Activated CD8-positive, alpha-beta T cell treated with anti-CD3 and anti-CD28 coated beads for 36 hours (primary cell): ENCODE measurements at regions of chr2 and their contacts with region 1.

Region 1: GRCh38 chr2:216119986-216120385 is 10.8 kb downstream of the XRCC5 start:
- DNase-seq: peak; percentile 41
- ATAC-seq: peak; percentile 90
- H3K4me3 Mint-ChIP-seq: peak overlapping the region; percentile 46
- H3K27ac Mint-ChIP-seq: peak overlapping the region; percentile 96
- H3K4me1 Mint-ChIP-seq: peaks cover 87% of the 10 kb centered on the region
- H3K27me3 Mint-ChIP-seq: no peaks in the 10 kb centered on the region
- CTCF ChIP-seq: no peak

Region 2: DNA sequence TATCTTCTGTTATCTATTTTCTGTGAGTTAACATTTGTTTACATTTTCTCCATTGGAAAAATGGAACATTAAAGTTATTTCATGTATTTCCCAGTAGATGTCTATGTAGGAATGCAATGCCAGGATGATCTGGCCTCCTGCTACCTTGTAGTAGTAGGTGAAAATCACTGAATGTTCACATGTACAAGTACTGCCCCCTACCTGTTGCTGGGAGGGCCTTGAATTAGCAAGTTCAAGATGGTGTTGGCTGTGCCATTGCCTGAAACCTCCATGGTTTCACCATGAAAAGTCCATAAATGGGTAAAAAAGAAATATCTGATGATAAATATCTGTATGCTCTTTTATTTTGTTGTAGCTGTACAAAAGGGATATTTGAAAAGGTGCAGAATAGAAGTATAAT is 19.9 kb after region 1 on chr2:
- CTCF ChIA-PET with region 1: interaction called, 22 read pairs
- POLR2A ChIA-PET with region 1: interaction called, 8 read pairs
- intact Hi-C with region 1: no loop called
- DNase-seq: peak; percentile 66
- ATAC-seq: no peak
- H3K4me3 Mint-ChIP-seq: no peak overlapping the region
- H3K27ac Mint-ChIP-seq: peak overlapping the region; percentile 55
- H3K4me1 Mint-ChIP-seq: peaks cover 49% of the 10 kb centered on the region
- H3K27me3 Mint-ChIP-seq: no peaks in the 10 kb centered on the region
- CTCF ChIP-seq: peak; percentile 52

Region 3: DNA sequence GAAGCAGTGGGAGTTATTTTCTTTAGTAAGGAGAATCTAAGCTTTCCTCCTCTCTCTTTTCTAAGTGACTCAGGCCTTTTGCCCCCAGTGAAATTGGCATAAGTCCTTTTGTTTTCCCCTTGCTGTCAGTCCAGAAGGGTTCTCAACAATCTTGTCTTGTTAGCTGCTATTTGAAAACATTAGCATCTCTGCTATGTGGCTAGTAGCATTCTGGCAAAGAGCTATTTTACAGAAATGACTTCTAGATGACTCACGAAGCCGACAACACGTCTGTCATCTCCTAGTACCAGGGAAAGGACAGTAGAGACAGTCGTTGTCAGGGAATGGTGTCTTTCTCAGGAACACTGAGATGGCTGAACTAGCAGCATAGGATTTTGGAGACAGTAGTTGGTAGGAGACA is 307.0 kb after region 1 on chr2:
- CTCF ChIA-PET with region 1: no interaction called
- POLR2A ChIA-PET with region 1: no interaction called
- intact Hi-C with region 1: no loop called
- DNase-seq: no peak
- ATAC-seq: no peak
- H3K4me3 Mint-ChIP-seq: no peak overlapping the region
- H3K27ac Mint-ChIP-seq: no peak overlapping the region
- H3K4me1 Mint-ChIP-seq: no peaks in the 10 kb centered on the region
- H3K27me3 Mint-ChIP-seq: no peaks in the 10 kb centered on the region
- CTCF ChIP-seq: no peak